Activated CD4-positive, alpha-beta T cell treated with anti-CD3 and anti-CD28 coated beads for 36 hours (primary cell): ENCODE measurements at regions of chr2 and their contacts with region 1.

Region 1: DNA sequence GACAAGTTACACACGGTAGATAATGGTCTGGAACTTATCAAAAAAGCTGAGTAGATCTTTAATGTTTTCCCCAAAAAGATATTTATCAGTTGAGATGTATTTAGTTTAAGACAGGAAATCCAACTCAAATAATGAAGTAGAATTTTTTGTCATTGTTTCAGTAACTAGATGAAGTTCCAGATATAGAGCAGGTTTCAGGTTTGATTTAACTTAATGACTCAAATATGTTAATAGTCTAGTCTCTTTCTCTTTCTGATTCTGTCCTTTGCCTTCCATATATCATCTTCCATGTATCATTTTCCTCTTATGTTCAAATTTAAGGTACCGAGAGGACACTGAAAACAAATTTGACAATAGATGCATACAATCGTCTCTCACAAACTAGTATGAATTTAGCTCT is 23.6 kb upstream of the DOCK10 start:
- DNase-seq: no peak
- ATAC-seq: peak; percentile 85
- H3K4me3 Mint-ChIP-seq: no peak overlapping the region
- H3K27ac Mint-ChIP-seq: no peak overlapping the region
- H3K4me1 Mint-ChIP-seq: peaks cover 45% of the 10 kb centered on the region
- H3K27me3 Mint-ChIP-seq: no peaks in the 10 kb centered on the region

Region 2: DNA sequence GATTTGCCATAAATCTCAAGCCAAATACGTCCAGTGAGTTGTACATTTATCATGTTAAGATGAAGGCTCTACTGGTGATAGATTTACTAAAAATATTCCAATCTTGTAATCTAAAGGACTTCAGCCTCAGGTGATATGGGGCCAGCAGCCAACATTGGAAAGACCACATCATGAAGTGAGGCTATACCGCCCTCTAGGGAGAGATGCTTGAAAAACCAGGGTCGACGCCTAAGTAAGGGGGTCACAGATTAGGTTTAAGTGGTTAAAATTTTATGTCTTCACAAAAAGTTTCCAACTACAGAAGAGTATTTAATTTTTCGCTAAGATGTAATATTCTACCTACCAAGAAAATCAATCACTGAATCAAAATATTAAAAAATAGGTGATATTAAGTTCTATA is 56.9 kb before region 1 on chr2:
- CTCF ChIA-PET with region 1: no interaction called
- POLR2A ChIA-PET with region 1: no interaction called
- intact Hi-C with region 1: no loop called
- DNase-seq: peak; percentile 43
- ATAC-seq: no peak
- H3K4me3 Mint-ChIP-seq: no peak overlapping the region
- H3K27ac Mint-ChIP-seq: peak overlapping the region; percentile 70
- H3K4me1 Mint-ChIP-seq: peaks cover 93% of the 10 kb centered on the region
- H3K27me3 Mint-ChIP-seq: no peaks in the 10 kb centered on the region

Region 3: GRCh38 chr2:225086915-225087314 is 21.0 kb after region 1 on chr2:
- CTCF ChIA-PET with region 1: no interaction called
- POLR2A ChIA-PET with region 1: no interaction called
- intact Hi-C with region 1: loop called in 1 of 2 experiments (anchors 2 kb)
- DNase-seq: no peak
- ATAC-seq: no peak
- H3K4me3 Mint-ChIP-seq: no peak overlapping the region
- H3K27ac Mint-ChIP-seq: no peak overlapping the region
- H3K4me1 Mint-ChIP-seq: peaks cover 11% of the 10 kb centered on the region
- H3K27me3 Mint-ChIP-seq: no peaks in the 10 kb centered on the region